ENCODE measurements at regions of chr1 and their contacts with region 1.

Region 1: DNA sequence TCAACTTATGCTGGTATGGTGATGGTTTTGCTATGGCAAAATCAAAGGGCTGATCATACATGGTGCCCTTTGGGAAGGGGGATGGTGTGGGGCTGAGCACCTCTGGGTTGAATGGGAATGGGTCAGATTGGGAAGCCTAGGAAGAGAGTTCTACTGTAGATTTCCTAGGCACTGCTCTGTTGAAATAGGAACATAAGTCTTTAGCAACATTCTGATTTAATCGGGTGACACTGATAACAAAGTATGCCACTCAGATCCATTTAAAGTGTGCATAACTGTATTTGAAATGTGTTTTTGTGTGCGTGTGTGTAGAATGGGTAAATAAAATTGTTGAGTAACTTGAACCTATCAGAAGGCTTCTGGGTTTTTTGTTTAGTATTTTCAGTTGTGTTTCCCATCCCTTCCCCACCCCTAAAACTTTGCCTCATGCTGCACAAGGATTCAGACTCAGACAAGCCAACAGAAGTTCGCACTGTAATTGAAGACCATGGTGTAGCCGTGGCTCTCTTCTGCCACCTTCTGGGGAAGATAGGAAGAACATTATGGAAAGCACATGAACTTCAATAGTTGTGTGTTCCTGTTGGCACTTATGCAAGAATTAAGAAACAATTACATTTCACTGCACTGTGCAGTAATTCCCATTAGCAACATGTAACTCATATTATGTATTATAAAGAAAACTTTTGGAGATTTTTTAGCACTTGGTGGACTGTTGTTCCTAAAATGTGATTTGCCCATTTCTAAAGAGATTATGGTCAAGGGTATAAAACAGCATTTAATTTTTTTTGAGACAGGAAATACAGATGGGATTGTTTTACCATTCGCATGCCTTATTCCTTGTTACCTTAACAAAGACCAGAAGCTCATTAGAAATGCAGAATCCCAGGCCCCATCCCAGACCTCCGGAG is 10.9 kb upstream of the C4BPB start:
- DNase-seq: peak; percentile 79 to 91 (median 82)
- ATAC-seq: peak; percentile 96
- H3K4me3 ChIP-seq: no peak overlapping the region
- H3K27ac ChIP-seq: no peak overlapping the region
- H3K4me1 ChIP-seq: peaks cover 0 to 10% of the 10 kb centered on the region in 2 experiments; a peak in 2 of 5 replicates
- H3K27me3 ChIP-seq: no peaks in the 10 kb centered on the region
- CTCF ChIP-seq: peak; percentile 92 to 98 (median 95)
- EP300 ChIP-seq: no peak
- POLR2A ChIP-seq: no peak
- RAD21 ChIP-seq: peak; percentile 97 to 98

Region 2: DNA sequence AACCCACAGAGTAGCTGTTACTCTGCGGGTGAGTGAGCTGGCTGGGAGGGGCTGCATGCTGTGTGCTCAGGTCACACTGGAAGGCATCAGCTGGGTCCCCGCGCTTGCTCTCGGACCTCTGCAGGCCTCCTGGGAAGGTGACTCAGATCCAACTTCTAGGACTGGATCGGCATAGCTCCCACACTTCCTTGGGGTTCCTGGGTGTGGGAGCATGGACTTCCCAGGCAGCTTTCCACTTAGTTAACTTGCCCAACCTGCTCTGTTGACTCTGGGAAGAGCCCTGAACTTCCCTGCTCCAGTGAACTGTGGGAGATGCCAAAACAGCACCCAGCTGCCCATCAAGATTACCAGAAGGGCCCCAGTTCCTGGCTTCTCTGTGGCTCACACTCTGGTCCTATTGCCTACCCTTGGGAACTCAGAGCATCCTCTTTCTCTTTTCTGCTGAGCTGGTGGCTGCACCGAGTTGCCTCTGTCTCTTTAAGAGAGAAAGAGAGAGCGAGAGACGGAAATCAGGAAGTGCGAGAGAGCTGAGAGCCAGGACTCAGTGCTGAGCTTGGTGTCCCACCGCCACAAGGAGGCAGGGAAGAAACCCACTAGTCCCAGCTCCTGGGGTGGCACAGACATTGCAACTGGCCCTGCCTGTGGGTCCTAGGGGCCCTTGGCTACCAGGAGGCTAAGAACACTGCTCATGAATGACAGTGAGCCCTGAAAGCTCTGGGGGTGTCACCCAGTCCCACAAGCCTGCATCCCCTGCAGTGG is 607.6 kb before region 1 on chr1 and contains the start of gene IKBKE:
- CTCF ChIA-PET with region 1: no interaction called
- POLR2A ChIA-PET with region 1: no interaction called
- in situ Hi-C with region 1: no loop called
- intact Hi-C with region 1: loop called (anchors 10 kb)
- DNase-seq: peak in 3 of 4 experiments; percentile 45 to 74 (median 73)
- ATAC-seq: peak; percentile 81
- H3K4me3 ChIP-seq: peak within 1 kb of the TSS; percentile 34
- H3K27ac ChIP-seq: no peak within 1 kb of the TSS
- H3K4me1 ChIP-seq: peaks cover 22 to 41% of the 10 kb centered on the region in 2 experiments
- H3K27me3 ChIP-seq: peaks cover 0 to 16% of the 10 kb centered on the region in 2 experiments; a peak in 3 of 5 replicates
- CTCF ChIP-seq: peak; percentile 35 to 51 (median 42); a peak in 4 of 6 replicates
- EP300 ChIP-seq: peak; percentile 44; the same call in 1 of the 2 replicates
- POLR2A ChIP-seq: no peak
- RAD21 ChIP-seq: peak in 1 of 2 experiments; percentile 43; a peak in 2 of 4 replicates
- polyA plus RNA-seq, gene IKBKE: 7.9 to 9.0 TPM

Region 3: GRCh38 chr1:206772243-206772937 is 305.3 kb before region 1 on chr1 and contains the start of gene IL10:
- CTCF ChIA-PET with region 1: no interaction called
- POLR2A ChIA-PET with region 1: no interaction called
- in situ Hi-C with region 1: no loop called
- intact Hi-C with region 1: no loop called
- DNase-seq: no peak
- ATAC-seq: no peak
- H3K4me3 ChIP-seq: no peak within 1 kb of the TSS
- H3K27ac ChIP-seq: no peak within 1 kb of the TSS
- H3K4me1 ChIP-seq: peaks cover 0 to 18% of the 10 kb centered on the region in 2 experiments; a peak in 3 of 5 replicates
- H3K27me3 ChIP-seq: peaks cover 36 to 70% of the 10 kb centered on the region in 2 experiments
- CTCF ChIP-seq: no peak
- EP300 ChIP-seq: no peak
- POLR2A ChIP-seq: no peak
- RAD21 ChIP-seq: no peak
- polyA plus RNA-seq, gene IL10: not detected

Region 4: GRCh38 chr1:206808615-206809014 is 269.1 kb before region 1 on chr1:
- CTCF ChIA-PET with region 1: no interaction called
- POLR2A ChIA-PET with region 1: no interaction called
- in situ Hi-C with region 1: no loop called
- intact Hi-C with region 1: loop called (anchors 10 kb)
- DNase-seq: peak; percentile 30 to 71 (median 48)
- ATAC-seq: peak; percentile 97
- H3K4me3 ChIP-seq: no peak overlapping the region
- H3K27ac ChIP-seq: no peak overlapping the region
- H3K4me1 ChIP-seq: no peaks in the 10 kb centered on the region
- H3K27me3 ChIP-seq: peaks cover 5 to 13% of the 10 kb centered on the region in 2 experiments; a peak in 3 of 5 replicates
- CTCF ChIP-seq: peak; percentile 75 to 81 (median 77)
- EP300 ChIP-seq: no peak
- POLR2A ChIP-seq: no peak
- RAD21 ChIP-seq: peak; percentile 92 to 95

Region 5: DNA sequence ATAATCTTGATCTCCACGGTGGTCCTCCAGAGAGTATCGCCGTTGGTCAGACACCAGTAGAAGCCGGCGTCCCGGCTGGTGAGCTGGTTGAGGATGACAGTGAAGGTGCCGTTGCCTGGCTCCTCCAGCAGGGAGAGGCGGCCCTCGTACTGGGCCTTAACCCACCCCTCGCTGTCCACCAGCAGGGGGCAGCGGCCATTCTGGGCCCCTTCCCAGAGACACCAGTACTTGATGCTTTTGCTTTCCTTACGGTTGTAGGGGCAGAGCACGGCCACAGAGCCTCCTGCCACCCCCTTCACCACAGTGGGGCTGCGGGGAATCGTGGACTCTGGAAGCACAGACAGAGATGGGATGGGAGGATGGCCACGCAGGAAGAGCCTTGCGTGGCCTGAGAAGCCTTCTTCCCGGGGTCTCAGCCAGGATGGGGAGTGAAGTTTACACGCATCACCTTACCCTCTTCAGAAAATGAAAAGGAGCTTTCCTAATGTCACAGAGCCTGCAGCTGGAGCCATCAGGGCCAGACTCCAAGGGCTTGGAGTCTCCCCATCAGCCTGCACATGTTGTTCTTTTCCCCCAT is 142.1 kb before region 1 on chr1:
- CTCF ChIA-PET with region 1: interaction called, 34 read pairs
- POLR2A ChIA-PET with region 1: interaction called, 4 read pairs
- in situ Hi-C with region 1: loop called (anchors 10 kb)
- intact Hi-C with region 1: loop called (anchors 2 kb)
- DNase-seq: peak; percentile 91 to 96 (median 92)
- ATAC-seq: peak; percentile 99
- H3K4me3 ChIP-seq: no peak overlapping the region
- H3K27ac ChIP-seq: no peak overlapping the region
- H3K4me1 ChIP-seq: peaks cover 9% of the 10 kb centered on the region in 2 experiments; a peak in 4 of 5 replicates
- H3K27me3 ChIP-seq: no peaks in the 10 kb centered on the region
- CTCF ChIP-seq: peak; percentile 100
- EP300 ChIP-seq: peak; percentile 31; the same call in 1 of the 2 replicates
- POLR2A ChIP-seq: no peak
- RAD21 ChIP-seq: peak; percentile 99

Region 6: GRCh38 chr1:207017615-207018559 is 59.8 kb before region 1 on chr1:
- CTCF ChIA-PET with region 1: interaction called, 3 read pairs
- POLR2A ChIA-PET with region 1: no interaction called
- in situ Hi-C with region 1: no loop called
- intact Hi-C with region 1: loop called (anchors 2 kb)
- DNase-seq: peak; percentile 78 to 89 (median 84)
- ATAC-seq: peak; percentile 31
- H3K4me3 ChIP-seq: no peak overlapping the region
- H3K27ac ChIP-seq: peak overlapping the region; percentile 9; the same call in 1 of the 3 replicates
- H3K4me1 ChIP-seq: peaks cover 58 to 80% of the 10 kb centered on the region in 2 experiments
- H3K27me3 ChIP-seq: no peaks in the 10 kb centered on the region
- CTCF ChIP-seq: no peak
- EP300 ChIP-seq: peak; percentile 96
- POLR2A ChIP-seq: no peak
- RAD21 ChIP-seq: 0 out of 4 replicates have a peak, but pooled peaks of 1 of the 2 experiments have one; percentile 13

Measured in K562 (cell line).